ENCODE measurements at regions of chr21 and their contacts with region 1.

Region 1: DNA sequence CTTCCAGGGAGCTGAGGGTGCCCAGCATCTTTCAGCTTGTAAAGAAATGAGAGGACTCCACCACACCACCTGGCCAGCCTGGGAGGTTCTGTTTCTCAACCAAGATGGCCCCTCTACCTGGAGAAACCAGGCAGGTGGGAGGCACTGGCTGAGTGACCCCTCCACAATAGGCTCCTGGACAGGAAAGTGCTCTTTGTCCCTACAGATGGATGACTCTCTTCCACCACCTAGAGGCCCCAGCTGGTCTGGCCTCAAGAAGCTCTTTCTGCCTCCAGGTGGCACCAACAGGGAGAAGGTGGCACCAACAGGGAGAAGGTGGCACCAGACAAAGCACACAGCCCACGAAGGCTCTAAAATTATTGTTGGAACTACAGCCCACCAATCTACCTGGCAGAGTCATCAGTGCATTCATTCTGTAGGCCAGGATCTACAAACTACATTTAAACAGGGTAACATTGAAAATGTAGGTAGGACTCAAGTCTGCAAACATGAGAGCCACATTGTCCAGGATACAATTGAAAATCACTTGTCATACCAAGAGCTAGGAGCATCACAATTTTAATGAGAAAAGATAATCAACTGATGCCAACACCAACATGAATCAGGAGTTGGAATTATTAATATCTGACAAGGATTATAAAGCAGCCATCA is 14.4 kb downstream of the TMPRSS3 start:
- DNase-seq: peak; percentile 76
- H3K4me3 Mint-ChIP-seq: no peak overlapping the region
- H3K27ac Mint-ChIP-seq: peak overlapping the region; percentile 2
- H3K4me1 Mint-ChIP-seq: peaks cover 13% of the 10 kb centered on the region
- H3K27me3 Mint-ChIP-seq: no peaks in the 10 kb centered on the region

Region 2: DNA sequence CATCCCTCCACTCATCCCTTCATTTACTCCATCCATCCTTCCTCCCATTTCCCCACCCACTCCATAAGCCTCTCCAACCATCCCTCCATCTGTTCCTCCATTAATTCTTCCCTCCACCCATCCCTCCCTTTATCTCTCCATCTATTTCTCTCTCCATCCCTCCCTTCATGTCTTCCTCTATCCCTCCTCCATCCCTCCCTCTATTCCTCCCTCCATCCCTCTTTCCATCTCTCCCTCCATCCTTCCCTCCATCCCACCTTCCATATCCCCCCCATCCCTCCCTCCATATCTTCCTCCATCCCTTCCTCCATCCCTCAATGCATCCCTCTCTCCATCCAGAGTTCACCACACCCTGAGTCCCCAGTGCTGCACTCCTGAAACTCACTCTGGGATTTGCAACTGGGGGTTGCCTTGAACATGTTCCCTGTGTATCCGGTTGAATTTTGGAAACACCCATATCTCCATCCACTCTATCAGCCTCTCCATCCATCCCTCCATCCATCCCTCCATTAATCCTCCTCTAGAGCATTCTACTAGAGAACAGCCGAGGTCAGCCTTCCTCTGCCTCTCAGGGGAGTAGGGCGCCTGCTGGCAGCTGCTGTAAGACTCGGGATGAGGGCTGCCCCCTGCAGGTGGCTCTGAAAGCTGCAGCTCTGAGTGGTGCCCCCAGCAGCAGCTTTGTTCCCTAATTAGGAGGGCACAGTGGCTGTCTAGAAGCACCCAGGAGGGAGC is 123.1 kb before region 1 on chr21:
- CTCF ChIA-PET with region 1: interaction called, 16 read pairs
- POLR2A ChIA-PET with region 1: no interaction called
- intact Hi-C with region 1: no loop called
- DNase-seq: peak; percentile 87
- H3K4me3 Mint-ChIP-seq: no peak overlapping the region
- H3K27ac Mint-ChIP-seq: no peak overlapping the region
- H3K4me1 Mint-ChIP-seq: peaks cover 7% of the 10 kb centered on the region
- H3K27me3 Mint-ChIP-seq: no peaks in the 10 kb centered on the region

Region 3: DNA sequence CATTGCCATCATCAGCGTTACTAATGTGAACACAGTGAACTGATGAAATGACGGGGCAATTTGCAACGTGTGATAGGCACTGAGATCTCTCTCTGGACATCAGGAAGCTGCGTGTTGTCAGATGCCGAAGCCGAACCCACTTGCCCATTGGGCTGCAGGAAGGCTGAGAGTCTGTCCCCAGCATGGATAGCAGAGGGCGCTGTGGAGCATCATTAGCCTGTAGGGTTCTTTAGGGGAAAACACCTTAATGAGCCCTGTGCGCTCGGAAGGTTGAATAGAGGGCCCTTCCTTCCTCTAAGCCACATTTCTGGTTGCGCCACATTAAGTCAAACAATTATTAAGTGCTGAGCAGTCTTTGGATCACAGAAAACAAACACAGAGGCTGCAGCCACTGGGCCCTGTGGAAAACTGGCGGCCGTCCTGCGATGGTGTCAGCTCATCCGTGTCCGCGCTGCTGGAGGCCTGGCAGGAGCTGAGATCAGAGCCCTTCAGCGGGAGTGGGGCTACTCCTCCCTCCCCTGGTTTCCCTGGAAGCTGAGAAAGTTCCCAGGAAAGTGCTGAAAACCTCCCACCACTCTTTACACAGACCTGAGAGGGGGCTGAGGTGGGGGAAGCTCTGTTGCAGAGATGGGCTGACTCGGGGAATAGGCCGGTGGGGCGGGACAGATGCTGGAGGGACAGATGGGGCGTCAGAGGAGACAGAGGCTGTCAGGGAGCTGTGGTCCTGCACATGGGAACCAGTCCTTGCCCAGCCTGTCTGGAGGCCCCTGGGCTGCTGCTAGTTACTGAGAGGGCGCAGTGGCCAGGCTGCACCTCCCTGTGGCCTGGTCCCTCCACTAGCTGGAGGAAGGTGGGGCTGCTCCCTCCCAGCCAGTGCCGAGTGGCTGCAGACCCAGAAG is 43.4 kb before region 1 on chr21:
- CTCF ChIA-PET with region 1: interaction called, 35 read pairs
- POLR2A ChIA-PET with region 1: no interaction called
- intact Hi-C with region 1: no loop called
- DNase-seq: peak; percentile 87
- H3K4me3 Mint-ChIP-seq: no peak overlapping the region
- H3K27ac Mint-ChIP-seq: no peak overlapping the region
- H3K4me1 Mint-ChIP-seq: peaks cover 23% of the 10 kb centered on the region
- H3K27me3 Mint-ChIP-seq: peaks cover 11% of the 10 kb centered on the region

Region 4: DNA sequence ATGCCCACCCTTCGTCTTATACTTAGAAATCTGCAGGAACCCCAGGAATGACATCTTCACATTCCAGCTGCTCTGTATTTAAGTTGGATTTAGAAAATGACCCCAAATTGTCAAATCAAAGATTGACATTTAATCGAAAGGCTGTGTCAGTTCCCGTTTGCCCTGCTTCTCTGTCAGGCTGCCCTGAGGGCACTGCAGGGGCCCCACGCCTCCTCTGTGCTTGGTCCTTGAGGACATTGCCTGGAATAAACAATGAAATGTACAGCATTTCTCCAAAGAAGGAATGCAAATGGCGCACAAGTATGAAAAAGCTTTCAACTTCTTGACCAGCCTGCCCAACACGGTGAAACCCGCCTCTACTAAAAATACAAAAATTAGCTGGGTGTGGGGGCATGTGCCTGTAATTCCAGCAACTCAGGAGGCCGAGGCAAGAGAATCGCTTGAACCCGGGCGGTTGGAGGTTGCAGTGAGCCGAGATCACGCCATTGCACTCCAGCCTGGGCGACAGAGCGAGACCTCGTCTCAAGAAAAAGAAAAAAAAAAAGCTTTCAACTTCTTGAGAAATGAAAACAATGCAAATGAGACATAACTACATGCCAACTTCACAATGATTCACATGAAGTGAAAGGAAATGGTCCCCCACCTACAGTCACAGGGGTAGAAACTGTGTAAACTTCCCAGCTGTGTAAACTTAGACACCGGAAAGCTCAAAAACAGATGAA is 11.4 kb after region 1 on chr21:
- CTCF ChIA-PET with region 1: interaction called, 33 read pairs
- POLR2A ChIA-PET with region 1: interaction called, 4 read pairs
- intact Hi-C with region 1: no loop called
- DNase-seq: peak; percentile 45
- H3K4me3 Mint-ChIP-seq: peak overlapping the region; percentile 64
- H3K27ac Mint-ChIP-seq: peak overlapping the region; percentile 84
- H3K4me1 Mint-ChIP-seq: peaks cover 52% of the 10 kb centered on the region
- H3K27me3 Mint-ChIP-seq: no peaks in the 10 kb centered on the region

Region 5: GRCh38 chr21:42414928-42415769 is 33.7 kb after region 1 on chr21:
- CTCF ChIA-PET with region 1: interaction called, 19 read pairs
- POLR2A ChIA-PET with region 1: no interaction called
- intact Hi-C with region 1: no loop called
- DNase-seq: peak; percentile 98
- H3K4me3 Mint-ChIP-seq: peak overlapping the region; percentile 67
- H3K27ac Mint-ChIP-seq: peak overlapping the region; percentile 96
- H3K4me1 Mint-ChIP-seq: peaks cover 45% of the 10 kb centered on the region
- H3K27me3 Mint-ChIP-seq: no peaks in the 10 kb centered on the region

Region 6: DNA sequence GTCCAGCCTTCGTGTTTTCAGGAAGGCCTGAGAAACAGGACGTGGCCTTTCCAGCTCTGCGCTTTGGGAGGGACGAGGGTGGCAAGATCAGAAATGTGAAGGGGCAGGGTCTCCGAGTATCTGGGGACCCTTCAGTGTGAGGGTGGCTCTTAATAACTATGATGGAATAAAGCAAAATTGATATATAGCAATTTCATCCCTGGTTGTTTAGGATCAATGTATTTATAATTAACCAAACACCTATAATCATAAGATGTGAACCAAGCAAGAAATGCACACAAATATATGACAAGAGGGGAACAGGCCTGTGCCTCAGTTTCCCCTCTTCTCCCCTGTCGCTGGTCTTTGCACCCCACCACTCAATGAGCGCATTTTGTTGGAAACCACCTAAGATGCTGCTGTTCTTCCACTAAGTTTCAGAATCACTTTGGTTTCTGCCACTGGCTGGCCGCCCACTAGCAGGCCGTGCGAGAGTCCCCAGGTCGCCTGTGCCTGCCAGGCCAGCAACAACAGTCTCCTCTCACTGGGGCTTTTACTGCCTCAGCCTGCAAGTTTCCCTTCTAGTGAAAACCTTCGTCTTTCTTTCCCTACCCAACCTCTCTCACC is 58.8 kb after region 1 on chr21:
- CTCF ChIA-PET with region 1: interaction called, 21 read pairs
- POLR2A ChIA-PET with region 1: no interaction called
- intact Hi-C with region 1: no loop called
- DNase-seq: peak; percentile 75
- H3K4me3 Mint-ChIP-seq: no peak overlapping the region
- H3K27ac Mint-ChIP-seq: peak overlapping the region; percentile 84
- H3K4me1 Mint-ChIP-seq: peaks cover 45% of the 10 kb centered on the region
- H3K27me3 Mint-ChIP-seq: no peaks in the 10 kb centered on the region